Activated CD8-positive, alpha-beta memory T cell treated with anti-CD3 and anti-CD28 coated beads, Interleukin-2, amount 10 ng/mL, durations not matched to agents 7 days and 5 days (primary cell): ENCODE measurements at regions of chr2 and their contacts with region 1.

Region 1: GRCh38 chr2:225002039-225002655 is 40.1 kb downstream of the DOCK10 start:
- DNase-seq: peak; percentile 79
- ATAC-seq: peak; percentile 83
- H3K4me3 Mint-ChIP-seq: no peak overlapping the region
- H3K27ac Mint-ChIP-seq: peak overlapping the region; percentile 71
- H3K4me1 Mint-ChIP-seq: peaks cover 62% of the 10 kb centered on the region
- H3K27me3 Mint-ChIP-seq: no peaks in the 10 kb centered on the region

Region 2: GRCh38 chr2:224927646-224928173 is 74.4 kb before region 1 on chr2:
- CTCF ChIA-PET with region 1: interaction called, 25 read pairs
- DNase-seq: peak; percentile 87
- ATAC-seq: peak; percentile 62
- H3K4me3 Mint-ChIP-seq: peak overlapping the region; percentile 46
- H3K27ac Mint-ChIP-seq: peak overlapping the region; percentile 94
- H3K4me1 Mint-ChIP-seq: peaks cover 96% of the 10 kb centered on the region
- H3K27me3 Mint-ChIP-seq: no peaks in the 10 kb centered on the region

Region 3: DNA sequence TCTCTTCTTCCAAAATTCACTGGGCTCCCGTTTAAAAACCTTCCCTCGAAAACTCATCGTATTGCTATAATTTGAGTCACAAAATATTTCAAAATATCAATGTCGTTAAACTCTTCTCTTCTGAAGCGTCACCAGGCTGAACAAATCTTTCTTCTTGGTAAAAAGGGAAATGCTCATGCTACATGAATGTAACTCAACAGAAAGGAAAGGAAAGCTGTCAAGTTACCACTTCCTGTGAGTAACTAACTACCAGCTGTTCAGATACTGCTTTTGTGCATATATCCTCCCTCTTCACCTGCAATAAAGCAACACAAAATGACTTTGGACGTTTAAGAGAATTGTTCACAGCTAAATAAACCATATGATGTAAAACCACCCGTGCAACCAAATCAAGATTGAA is 55.3 kb before region 1 on chr2:
- CTCF ChIA-PET with region 1: interaction called, 22 read pairs
- DNase-seq: no peak
- ATAC-seq: peak; percentile 66
- H3K4me3 Mint-ChIP-seq: peak overlapping the region; percentile 86
- H3K27ac Mint-ChIP-seq: peak overlapping the region; percentile 96
- H3K4me1 Mint-ChIP-seq: peaks cover 64% of the 10 kb centered on the region
- H3K27me3 Mint-ChIP-seq: no peaks in the 10 kb centered on the region

Region 4: DNA sequence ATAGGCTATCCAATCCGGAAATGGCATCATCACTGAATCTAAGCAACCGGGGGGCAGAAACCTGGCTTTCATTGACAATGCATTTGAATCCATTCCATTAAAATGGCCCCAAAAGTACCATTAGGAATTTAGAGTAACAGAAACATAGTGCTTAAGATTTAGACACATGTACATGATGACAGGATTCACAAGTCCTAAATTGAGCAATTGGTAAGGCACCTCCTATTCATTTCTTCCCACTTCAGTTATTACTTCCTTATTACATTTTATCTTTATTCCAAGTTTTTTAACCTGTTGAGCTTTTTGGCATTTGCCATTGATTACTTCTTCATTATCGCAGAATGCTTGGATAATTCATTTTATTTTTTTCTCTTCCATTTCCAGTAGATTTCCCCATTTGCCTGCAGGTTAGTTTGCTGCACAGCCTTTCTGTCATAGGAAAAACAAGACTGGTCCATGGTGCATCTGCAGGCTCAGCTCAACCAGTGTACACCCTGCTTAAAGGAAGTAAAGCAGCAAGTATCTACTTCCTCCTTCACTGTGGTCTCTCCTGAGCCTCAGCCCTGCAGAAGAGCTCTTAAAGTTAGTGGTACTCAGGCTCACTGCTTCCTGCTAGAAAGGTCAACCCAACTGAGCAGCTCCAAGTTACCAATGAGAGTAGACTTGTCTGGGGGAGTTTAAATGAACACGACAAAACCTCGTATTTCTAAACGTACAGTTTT is 49.0 kb before region 1 on chr2:
- CTCF ChIA-PET with region 1: interaction called, 13 read pairs
- DNase-seq: peak; percentile 84
- ATAC-seq: peak; percentile 88
- H3K4me3 Mint-ChIP-seq: peak overlapping the region; percentile 49
- H3K27ac Mint-ChIP-seq: peak overlapping the region; percentile 89
- H3K4me1 Mint-ChIP-seq: peaks cover 89% of the 10 kb centered on the region
- H3K27me3 Mint-ChIP-seq: no peaks in the 10 kb centered on the region

Region 5: DNA sequence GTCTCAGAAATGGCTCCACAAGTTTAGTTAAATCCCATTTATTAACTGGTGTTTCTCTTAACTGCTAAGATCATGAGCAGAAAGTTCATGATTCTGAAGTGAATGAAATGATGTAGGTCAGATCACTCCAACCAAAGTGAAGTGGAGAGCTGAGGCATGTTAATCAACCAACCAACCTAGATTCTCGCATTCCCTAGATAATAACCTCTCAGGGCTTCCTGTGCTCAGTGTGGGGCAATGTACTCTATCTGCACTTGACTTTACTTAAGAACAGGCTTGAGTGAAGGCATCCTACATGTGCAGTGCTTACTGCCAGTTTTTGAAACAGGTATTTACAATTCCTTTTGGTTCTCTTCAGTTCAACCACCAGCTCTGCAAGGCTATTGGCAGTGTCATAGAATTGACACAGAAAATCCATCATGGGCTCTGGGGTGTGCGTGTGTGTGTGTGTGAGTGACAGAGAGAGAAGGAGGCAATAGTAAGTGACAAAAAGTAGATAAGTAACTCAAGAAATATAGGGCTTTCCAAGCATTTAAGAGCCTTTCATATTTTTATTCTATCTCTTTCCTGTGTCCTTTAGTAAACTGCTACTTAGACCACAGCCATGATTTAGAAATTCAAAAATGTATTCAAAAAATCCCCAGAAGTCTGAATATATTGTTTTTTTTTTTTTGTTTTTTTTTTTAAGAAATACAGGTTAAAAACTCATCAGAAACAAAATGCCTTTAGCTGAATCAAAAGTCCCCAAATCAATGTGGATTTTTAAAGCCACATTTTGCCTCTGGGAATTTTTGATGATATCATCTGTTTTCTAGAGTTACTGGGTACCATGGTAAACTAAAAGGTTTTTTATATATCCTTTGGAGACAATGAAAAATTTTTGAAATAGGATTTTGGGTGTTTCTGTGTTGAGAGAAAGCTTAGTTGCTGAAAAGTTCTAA is 11.5 kb after region 1 on chr2:
- CTCF ChIA-PET with region 1: interaction called, 16 read pairs
- DNase-seq: no peak
- ATAC-seq: peak; percentile 34
- H3K4me3 Mint-ChIP-seq: no peak overlapping the region
- H3K27ac Mint-ChIP-seq: no peak overlapping the region
- H3K4me1 Mint-ChIP-seq: peaks cover 50% of the 10 kb centered on the region
- H3K27me3 Mint-ChIP-seq: no peaks in the 10 kb centered on the region